ENCODE measurements at regions of chr2 and their contacts with region 1.

Region 1: GRCh38 chr2:47323009-47323821 is 79.7 kb upstream of the MSH2 start:
- DNase-seq: peak in 1 of 2 donors; percentile 84
- H3K4me3 ChIP-seq: no peak overlapping the region
- H3K27ac ChIP-seq: no peak overlapping the region
- H3K4me1 ChIP-seq: no peaks in the 10 kb centered on the region
- H3K27me3 ChIP-seq: no peaks in the 10 kb centered on the region
- CTCF ChIP-seq: peak; percentile 97 to 99 (median 99)

Region 2: DNA sequence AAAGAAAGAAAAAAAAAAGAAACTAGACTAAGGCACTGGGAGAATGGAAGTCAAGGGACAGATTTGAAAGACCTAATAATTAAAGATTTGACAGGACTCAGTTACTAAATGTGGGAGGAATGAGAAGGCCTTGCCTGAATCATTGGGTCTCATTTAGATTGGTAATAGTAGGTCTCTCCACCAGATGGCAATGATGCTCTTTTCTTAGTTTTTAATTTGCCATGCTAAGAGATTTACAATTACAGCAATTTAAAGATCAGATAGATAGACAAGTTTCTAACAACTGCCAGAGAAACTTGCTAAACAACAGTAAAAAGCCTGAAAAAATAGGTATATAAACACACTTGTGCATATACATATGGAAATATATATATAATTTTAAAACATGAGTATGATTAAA is 690.9 kb before region 1 on chr2:
- intact Hi-C with region 1: loop called (anchors 10 kb)
- DNase-seq: no peak
- H3K4me3 ChIP-seq: no peak overlapping the region
- H3K27ac ChIP-seq: no peak overlapping the region
- H3K4me1 ChIP-seq: no peaks in the 10 kb centered on the region
- H3K27me3 ChIP-seq: no peaks in the 10 kb centered on the region
- CTCF ChIP-seq: peak; percentile 37 to 67 (median 45)

Region 3: GRCh38 chr2:47471429-47472116 is 148.4 kb after region 1 on chr2:
- intact Hi-C with region 1: no loop called
- DNase-seq: no peak
- H3K4me3 ChIP-seq: no peak overlapping the region
- H3K27ac ChIP-seq: no peak overlapping the region
- H3K4me1 ChIP-seq: no peaks in the 10 kb centered on the region
- H3K27me3 ChIP-seq: no peaks in the 10 kb centered on the region
- CTCF ChIP-seq: no peak

Measured in ascending aorta (tissue), 2 donors.